ENCODE measurements at regions of chr2 and their contacts with region 1.

Region 1: GRCh38 chr2:237858294-237859081 is 935 bp upstream of the RAMP1 start:
- DNase-seq: peak; percentile 82 to 87 (median 84)
- ATAC-seq: peak; percentile 59
- H3K4me3 ChIP-seq: no peak overlapping the region
- H3K27ac ChIP-seq: peak overlapping the region; percentile 55 to 96 (median 90)
- H3K4me1 ChIP-seq: peaks cover 39% of the 10 kb centered on the region
- H3K27me3 ChIP-seq: no peaks in the 10 kb centered on the region
- CTCF ChIP-seq: peak; percentile 68 to 95 (median 94)
- POLR2A ChIP-seq: no peak

Region 2: DNA sequence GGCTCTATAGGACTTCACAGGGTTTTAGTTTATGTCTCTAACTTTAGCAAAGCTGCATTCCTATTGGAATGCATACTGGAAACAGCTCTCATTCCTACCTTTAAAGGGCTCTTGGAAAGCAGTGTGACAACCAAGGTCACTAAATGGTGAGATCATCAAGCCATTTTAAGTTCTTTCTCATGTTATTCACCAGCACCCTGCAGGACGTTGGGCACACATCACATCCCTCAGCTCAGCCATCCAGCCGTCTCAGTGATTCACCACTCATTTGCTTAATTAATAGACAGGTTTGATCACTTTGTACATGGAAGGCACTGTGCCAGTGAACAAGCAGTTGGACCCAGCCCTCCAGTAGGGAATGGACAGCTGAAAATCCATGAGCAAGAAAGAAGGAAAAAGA is 92.1 kb before region 1 on chr2:
- intact Hi-C with region 1: no loop called
- DNase-seq: no peak
- ATAC-seq: peak; percentile 62
- H3K4me3 ChIP-seq: no peak overlapping the region
- H3K27ac ChIP-seq: no peak overlapping the region
- H3K4me1 ChIP-seq: no peaks in the 10 kb centered on the region
- H3K27me3 ChIP-seq: no peaks in the 10 kb centered on the region
- CTCF ChIP-seq: no peak
- POLR2A ChIP-seq: no peak

Region 3: DNA sequence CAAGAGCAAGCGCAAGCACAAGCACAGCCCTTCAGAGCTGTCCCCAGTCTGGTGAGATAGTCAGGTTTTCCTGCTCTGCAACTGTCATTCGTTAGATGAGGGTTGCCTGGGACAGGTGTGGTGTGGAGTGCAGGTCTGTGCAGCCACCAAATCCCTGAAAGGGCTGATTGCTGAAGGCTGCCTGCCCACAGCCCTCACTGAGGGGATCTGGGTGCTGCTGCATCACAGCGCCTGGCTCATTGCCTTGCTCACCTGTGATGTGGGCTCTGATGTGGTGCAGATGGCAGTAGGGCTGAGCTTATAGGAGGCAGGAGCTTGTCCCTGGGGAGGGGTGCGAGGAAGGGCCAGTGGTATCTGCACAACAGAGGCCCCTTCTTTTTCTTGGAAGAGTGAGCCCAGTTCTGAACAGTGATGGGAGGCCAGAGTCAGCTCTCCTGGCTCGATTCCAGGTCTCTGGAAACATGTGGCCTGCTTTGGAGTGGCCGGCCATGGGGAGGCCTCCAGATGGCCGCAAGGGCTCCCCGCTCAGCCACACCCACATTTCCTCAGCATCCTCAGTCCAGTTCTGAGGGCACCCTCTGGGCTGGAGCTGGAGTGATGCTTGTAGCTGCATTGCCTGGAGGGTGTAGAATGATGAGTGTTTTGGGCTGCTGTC is 119.7 kb after region 1 on chr2:
- intact Hi-C with region 1: no loop called
- DNase-seq: peak in 3 of 4 donors; percentile 30 to 51 (median 47)
- ATAC-seq: peak; percentile 21
- H3K4me3 ChIP-seq: no peak overlapping the region
- H3K27ac ChIP-seq: no peak overlapping the region
- H3K4me1 ChIP-seq: peaks cover 48% of the 10 kb centered on the region
- H3K27me3 ChIP-seq: no peaks in the 10 kb centered on the region
- CTCF ChIP-seq: no peak
- POLR2A ChIP-seq: no peak

Region 4: DNA sequence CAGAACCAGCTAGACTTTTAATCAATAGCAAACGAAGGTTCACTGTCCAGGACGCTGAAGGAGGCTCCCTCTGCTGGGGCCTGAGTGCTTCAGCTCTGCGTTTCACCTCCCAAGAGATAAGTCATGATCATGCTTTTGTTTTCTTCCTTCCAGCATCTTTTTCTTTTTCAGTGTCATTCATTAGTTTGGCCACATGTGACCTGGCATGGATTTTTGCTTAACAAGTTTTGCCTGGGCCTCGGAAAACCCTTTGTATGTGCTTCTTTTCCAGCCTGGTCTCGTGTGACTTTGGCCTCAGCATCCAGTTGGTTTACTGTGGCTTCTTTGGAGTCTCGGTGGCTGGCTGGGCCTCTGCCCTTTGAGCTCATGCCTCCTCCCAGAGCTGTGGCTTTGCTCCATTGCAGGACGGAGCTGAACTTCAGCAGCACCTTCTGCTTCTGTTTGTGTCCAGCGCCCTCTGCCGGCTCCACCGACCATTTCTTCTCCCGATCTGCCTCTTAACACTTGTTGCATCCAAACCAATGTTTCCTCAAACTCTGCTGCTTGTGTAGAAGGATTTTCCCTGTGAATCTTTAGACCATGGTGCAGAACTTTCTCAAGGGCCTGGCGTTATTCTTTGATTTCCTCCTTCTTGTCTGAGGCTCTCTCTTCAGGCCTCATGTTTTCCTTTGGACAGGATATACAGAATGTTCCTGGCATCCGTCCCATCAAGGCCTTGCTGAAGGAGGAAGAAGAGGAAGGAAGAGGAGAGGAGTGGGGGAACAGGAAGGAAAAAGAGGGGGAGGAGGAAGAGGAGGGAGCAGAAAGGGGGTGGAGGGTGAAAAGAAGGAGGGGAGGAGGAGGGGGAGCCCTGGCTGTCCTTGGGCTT is 404.9 kb after region 1 on chr2:
- intact Hi-C with region 1: loop called (anchors 5 kb)
- DNase-seq: peak; percentile 92 to 95 (median 94)
- ATAC-seq: peak; percentile 90
- H3K4me3 ChIP-seq: no peak overlapping the region
- H3K27ac ChIP-seq: peak overlapping the region in 3 of 4 donors; percentile 30 to 57 (median 42)
- H3K4me1 ChIP-seq: peaks cover 17% of the 10 kb centered on the region
- H3K27me3 ChIP-seq: no peaks in the 10 kb centered on the region
- CTCF ChIP-seq: peak; percentile 53 to 93 (median 87)
- POLR2A ChIP-seq: no peak

Measured in body of pancreas (tissue), 4 donors.